T-cell (primary cell): ENCODE measurements at regions of chr22 and their contacts with region 1.

Region 1: GRCh38 chr22:39520054-39520891 is at the start of gene ATF4:
- DNase-seq: peak; percentile 93 to 99 (median 96)
- ATAC-seq: peak; percentile 90 to 92 (median 91)
- H3K4me3 ChIP-seq: peak within 1 kb of the TSS; percentile 89 to 99
- H3K4me3 Mint-ChIP-seq: peak within 1 kb of the TSS; percentile 85 to 95 (median 94)
- H3K27ac ChIP-seq: peak within 1 kb of the TSS; percentile 83
- H3K27ac Mint-ChIP-seq: peak within 1 kb of the TSS; percentile 96 to 98
- H3K4me1 ChIP-seq: peaks cover 24 to 53% of the 10 kb centered on the region in 2 experiments
- H3K4me1 Mint-ChIP-seq: peaks cover 40 to 52% (median 51%) of the 10 kb centered on the region in 3 donors
- H3K27me3 ChIP-seq: no peaks in the 10 kb centered on the region
- H3K27me3 Mint-ChIP-seq: peaks cover 0 to 2% of the 10 kb centered on the region in 2 donors
- total RNA-seq, gene ATF4: 236 to 371 (median 327) TPM

Region 2: DNA sequence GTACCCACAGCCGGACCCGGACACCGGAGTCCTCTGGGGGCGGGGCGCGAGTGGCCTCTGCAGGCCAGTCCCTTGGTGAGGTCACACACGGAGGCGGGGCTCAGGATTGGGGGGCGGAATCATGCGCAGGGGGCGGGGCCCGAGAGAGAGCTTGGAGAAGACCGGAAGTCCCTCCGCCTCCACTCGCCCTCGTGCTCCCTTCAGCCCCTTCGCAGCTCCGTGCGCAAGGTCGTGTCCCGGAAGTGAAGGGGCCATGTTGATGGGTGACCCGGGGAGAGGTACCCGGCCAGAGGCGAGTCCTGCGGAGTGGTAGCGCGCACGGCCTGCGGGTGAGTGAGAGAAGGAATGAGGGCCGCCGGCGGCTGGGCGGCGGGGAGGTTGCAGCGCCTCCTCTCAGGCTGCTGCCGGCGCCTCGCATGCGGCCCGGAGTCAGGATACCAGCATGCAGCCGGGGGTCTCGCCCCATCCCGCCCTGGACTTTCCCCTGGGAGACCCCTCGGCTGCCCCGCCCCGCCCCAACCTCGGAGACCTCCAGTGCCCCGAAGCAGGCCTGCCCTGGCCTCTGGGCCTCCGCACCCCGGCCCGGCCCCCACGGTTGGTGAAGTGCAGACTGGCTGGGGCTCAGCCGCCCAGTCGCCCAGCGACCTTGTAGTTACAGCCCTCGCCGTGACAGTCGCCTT is 18.0 kb before region 1 on chr22 and contains the start of gene MIEF1:
- CTCF ChIA-PET with region 1: interaction called, 4 to 5 read pairs
- POLR2A ChIA-PET with region 1: interaction called, 5 to 15 read pairs
- DNase-seq: peak; percentile 71 to 93 (median 82)
- ATAC-seq: peak; percentile 93 to 97 (median 96)
- H3K4me3 ChIP-seq: peak within 1 kb of the TSS; percentile 72 to 77
- H3K4me3 Mint-ChIP-seq: peak within 1 kb of the TSS; percentile 95 to 99 (median 95)
- H3K27ac ChIP-seq: peak within 1 kb of the TSS; percentile 63
- H3K27ac Mint-ChIP-seq: peak within 1 kb of the TSS; percentile 95 to 98
- H3K4me1 ChIP-seq: peaks cover 10 to 43% of the 10 kb centered on the region in 2 experiments
- H3K4me1 Mint-ChIP-seq: peaks cover 44 to 47% (median 45%) of the 10 kb centered on the region in 3 donors
- H3K27me3 ChIP-seq: peaks cover 0 to 2% of the 10 kb centered on the region in 2 experiments
- H3K27me3 Mint-ChIP-seq: no peaks in the 10 kb centered on the region
- total RNA-seq, gene MIEF1: 19.7 to 44.1 (median 38.5) TPM